ENCODE measurements at regions of chr7 and their contacts with region 1.

Region 1: DNA sequence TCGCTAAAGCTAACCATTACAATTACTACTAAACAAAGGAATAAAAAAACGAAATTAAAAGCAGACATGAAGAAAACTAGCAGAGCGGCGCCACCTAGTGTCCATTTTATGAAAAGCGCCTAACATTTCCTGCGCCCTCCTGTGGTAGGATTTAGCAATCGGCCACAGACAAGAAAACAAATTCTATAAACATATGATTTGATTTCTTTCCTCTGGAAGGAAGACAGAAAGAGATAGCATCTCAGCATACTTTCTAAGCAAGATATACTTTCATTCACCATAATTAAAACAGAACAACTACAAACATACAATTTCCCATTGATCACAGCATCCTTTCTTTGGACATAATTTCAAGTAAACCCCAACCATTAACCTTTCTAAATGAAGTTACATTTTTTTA is 337.7 kb upstream of the NPVF start:
- DNase-seq: peak; percentile 44
- H3K4me3 Mint-ChIP-seq: no peak overlapping the region
- H3K27ac Mint-ChIP-seq: no peak overlapping the region
- H3K4me1 Mint-ChIP-seq: peaks cover 11% of the 10 kb centered on the region
- H3K27me3 Mint-ChIP-seq: peaks cover 9% of the 10 kb centered on the region

Region 2: DNA sequence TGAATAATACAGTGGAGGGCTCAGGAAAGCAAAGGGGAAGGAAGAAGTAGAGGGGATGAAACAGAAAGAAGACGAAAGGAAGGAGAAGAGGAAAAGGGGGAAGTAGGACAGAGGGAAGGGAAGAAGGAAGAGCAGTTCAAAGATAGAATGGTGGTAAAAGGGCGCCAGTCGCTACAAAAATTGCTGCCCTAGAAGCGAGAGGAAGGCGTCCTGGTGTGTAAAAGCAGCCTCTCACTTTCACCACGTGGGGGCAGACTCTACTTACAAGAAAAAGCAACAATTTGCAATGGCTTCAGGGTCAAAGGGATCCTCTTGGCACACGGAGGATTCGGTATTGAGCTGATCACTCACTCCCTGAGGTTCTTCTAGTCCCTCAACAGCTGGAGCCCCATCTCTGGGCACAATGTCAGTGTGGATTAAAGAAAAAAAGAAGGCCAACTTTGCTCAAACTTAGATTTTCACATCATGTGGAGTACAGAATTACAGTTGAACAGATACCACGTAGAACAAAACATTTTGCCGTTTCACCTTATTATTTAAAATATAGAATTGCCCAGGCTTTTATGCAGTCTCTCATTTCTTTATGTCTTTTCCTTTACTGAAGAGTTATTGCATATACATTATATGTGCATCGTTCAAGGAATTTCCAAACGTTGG is 306.2 kb before region 1 on chr7:
- intact Hi-C with region 1: loop called (anchors 1 kb)
- DNase-seq: peak; percentile 40
- H3K4me3 Mint-ChIP-seq: no peak overlapping the region
- H3K27ac Mint-ChIP-seq: no peak overlapping the region
- H3K4me1 Mint-ChIP-seq: peaks cover 27% of the 10 kb centered on the region
- H3K27me3 Mint-ChIP-seq: peaks cover 4% of the 10 kb centered on the region

Region 3: GRCh38 chr7:25389489-25390106 is 176.4 kb before region 1 on chr7:
- intact Hi-C with region 1: loop called (anchors 1 kb)
- DNase-seq: no peak
- H3K4me3 Mint-ChIP-seq: no peak overlapping the region
- H3K27ac Mint-ChIP-seq: no peak overlapping the region
- H3K4me1 Mint-ChIP-seq: no peaks in the 10 kb centered on the region
- H3K27me3 Mint-ChIP-seq: peaks cover 20% of the 10 kb centered on the region

Region 4: GRCh38 chr7:25787336-25787735 is 221.4 kb after region 1 on chr7:
- intact Hi-C with region 1: no loop called
- DNase-seq: no peak
- H3K4me3 Mint-ChIP-seq: no peak overlapping the region
- H3K27ac Mint-ChIP-seq: no peak overlapping the region
- H3K4me1 Mint-ChIP-seq: no peaks in the 10 kb centered on the region
- H3K27me3 Mint-ChIP-seq: peaks cover 13% of the 10 kb centered on the region

Region 5: GRCh38 chr7:26216049-26216448 is 650.1 kb after region 1 on chr7:
- intact Hi-C with region 1: no loop called
- DNase-seq: no peak
- H3K4me3 Mint-ChIP-seq: no peak overlapping the region
- H3K27ac Mint-ChIP-seq: no peak overlapping the region
- H3K4me1 Mint-ChIP-seq: peaks cover 15% of the 10 kb centered on the region
- H3K27me3 Mint-ChIP-seq: peaks cover 4% of the 10 kb centered on the region

Measured in activated T-helper 1 cell treated with anti-CD3 and anti-CD28 coated beads, Interleukin-12 subunit alpha, Interleukin-12 subunit beta, Interleukin-2, Interleukin-4 antibody, amounts not matched to agents 30 ng/mL and 10 ng/mL and 1 ng/mL, durations not matched to agents 14 hours and 24 hours and 36 hours (primary cell).